GM18951 (cell line): ENCODE measurements at regions of chr7 and their contacts with region 1.

Region 1: GRCh38 chr7:47444379-47445057 is 137.4 kb downstream of the TNS3 start:
- POLR2A ChIP-seq: no peak

Region 2: GRCh38 chr7:47596502-47597202 is 152.1 kb after region 1 on chr7:
- in situ Hi-C with region 1: loop called (anchors 5 kb)
- POLR2A ChIP-seq: no peak

Region 3: GRCh38 chr7:47818796-47819606 is 374.5 kb after region 1 on chr7:
- in situ Hi-C with region 1: loop called (anchors 10 kb)
- POLR2A ChIP-seq: no peak